Spleen (tissue), 13 donors: ENCODE measurements at regions of chr2 and their contacts with region 1.

Region 1: GRCh38 chr2:216412022-216412999 is at the start of gene SMARCAL1:
- DNase-seq: peak; percentile 99
- H3K4me3 ChIP-seq: peak within 1 kb of the TSS; percentile 49 to 85 (median 62)
- H3K27ac ChIP-seq: peak within 1 kb of the TSS; percentile 89 to 98 (median 95)
- H3K4me1 ChIP-seq: peaks cover 0 to 33% (median 15%) of the 10 kb centered on the region in 6 donors
- H3K27me3 ChIP-seq: no peaks in the 10 kb centered on the region
- CTCF ChIP-seq: peak in 3 of 11 experiments; percentile 10 to 15 (median 11)
- POLR2A ChIP-seq: no peak
- total RNA-seq, gene SMARCAL1: 21.9 to 34.9 (median 25.4) TPM

Region 2: DNA sequence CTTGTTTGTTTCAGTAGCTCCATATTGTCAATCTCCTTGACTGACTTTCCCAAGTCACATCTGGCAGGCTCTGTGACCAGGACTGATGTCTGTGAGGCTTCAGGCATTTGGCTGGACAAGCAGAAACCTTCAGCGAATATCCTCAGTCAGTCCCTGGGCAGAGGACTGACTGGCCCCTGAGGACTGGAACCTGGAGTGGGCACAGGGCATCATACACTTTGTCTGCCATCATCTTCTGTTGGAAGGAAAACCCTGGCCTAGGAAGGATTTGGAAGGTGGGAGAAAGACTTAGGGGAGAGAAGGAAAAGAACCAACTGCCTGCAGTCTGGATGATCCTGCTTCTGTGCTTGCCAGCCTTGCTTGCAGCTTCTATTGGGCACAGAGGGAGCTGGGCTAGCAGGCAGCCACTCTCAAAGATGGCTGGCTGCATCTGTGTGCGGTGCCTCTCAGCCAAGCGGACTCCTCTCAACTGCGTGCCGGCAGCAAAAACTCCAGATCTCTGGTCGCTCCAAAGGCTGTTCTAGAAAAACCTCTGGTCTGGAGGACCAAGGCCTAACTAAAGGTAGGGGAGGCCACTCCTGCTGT is 166.8 kb before region 1 on chr2:
- intact Hi-C with region 1: no loop called
- DNase-seq: no peak
- H3K4me3 ChIP-seq: no peak overlapping the region
- H3K27ac ChIP-seq: no peak overlapping the region
- H3K4me1 ChIP-seq: no peaks in the 10 kb centered on the region
- H3K27me3 ChIP-seq: no peaks in the 10 kb centered on the region
- CTCF ChIP-seq: no peak
- POLR2A ChIP-seq: no peak

Region 3: GRCh38 chr2:216480221-216480620 is 67.9 kb after region 1 on chr2:
- intact Hi-C with region 1: no loop called
- DNase-seq: no peak
- H3K4me3 ChIP-seq: no peak overlapping the region
- H3K27ac ChIP-seq: no peak overlapping the region
- H3K4me1 ChIP-seq: peaks cover 0 to 7% (median 5%) of the 10 kb centered on the region in 6 donors
- H3K27me3 ChIP-seq: no peaks in the 10 kb centered on the region
- CTCF ChIP-seq: no peak
- POLR2A ChIP-seq: no peak

Region 4: GRCh38 chr2:216498418-216499413 is 86.4 kb after region 1 on chr2 and contains the start of gene RPL37A:
- intact Hi-C with region 1: loop called (anchors 10 kb)
- DNase-seq: peak; percentile 97
- H3K4me3 ChIP-seq: peak within 1 kb of the TSS; percentile 59 to 90 (median 76)
- H3K27ac ChIP-seq: peak within 1 kb of the TSS; percentile 79 to 90 (median 86)
- H3K4me1 ChIP-seq: peaks cover 19 to 83% (median 57%) of the 10 kb centered on the region in 6 donors
- H3K27me3 ChIP-seq: no peaks in the 10 kb centered on the region
- CTCF ChIP-seq: peak in 3 of 11 experiments; percentile 12 to 21 (median 19)
- POLR2A ChIP-seq: peak; percentile 44 to 83 (median 76)
- total RNA-seq, gene RPL37A: 688 to 2,288 (median 1,633) TPM

Region 5: DNA sequence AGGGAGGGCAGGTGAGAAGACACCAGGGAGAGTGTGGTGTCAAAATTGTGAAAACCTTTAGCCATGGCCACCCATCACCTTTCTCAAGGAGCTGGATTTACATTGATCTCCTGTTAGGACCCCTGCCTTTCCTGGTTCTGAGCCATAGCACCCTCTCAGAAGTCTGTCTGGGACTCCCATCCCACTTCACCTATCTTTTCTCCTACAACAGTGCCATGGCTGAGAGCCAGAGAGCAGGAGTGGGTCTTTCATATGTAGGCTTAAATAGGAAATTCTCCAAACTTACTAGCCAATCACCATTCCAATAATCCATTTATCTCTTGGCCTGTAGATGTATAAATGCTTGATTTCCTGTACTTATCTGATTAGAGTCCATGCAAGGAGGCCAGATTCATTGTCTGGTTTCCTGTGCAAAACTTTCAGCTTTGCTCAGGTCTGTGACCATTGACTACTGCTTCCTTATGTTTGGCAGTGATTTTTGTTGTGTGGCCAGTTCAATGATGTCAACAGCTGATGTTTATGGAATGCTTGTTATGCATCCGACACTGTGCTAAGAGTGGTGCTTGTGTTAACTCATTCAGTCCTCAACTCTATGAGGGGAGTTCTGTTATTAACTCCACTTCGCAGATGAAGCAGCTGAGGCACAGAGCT is 340.7 kb after region 1 on chr2:
- intact Hi-C with region 1: no loop called
- DNase-seq: no peak
- H3K4me3 ChIP-seq: no peak overlapping the region
- H3K27ac ChIP-seq: no peak overlapping the region
- H3K4me1 ChIP-seq: peaks cover 0 to 6% (median 0%) of the 10 kb centered on the region in 6 donors
- H3K27me3 ChIP-seq: no peaks in the 10 kb centered on the region
- CTCF ChIP-seq: no peak
- POLR2A ChIP-seq: no peak